AG04450 (cell line): ENCODE measurements at regions of chr11 and their contacts with region 1.

Region 1: GRCh38 chr11:83051760-83052671 is 19.7 kb downstream of the RAB30 start:
- DNase-seq: peak; percentile 94
- H3K4me3 ChIP-seq: no peak overlapping the region
- H3K27ac ChIP-seq: peak overlapping the region; percentile 97
- H3K27me3 ChIP-seq: no peaks in the 10 kb centered on the region
- CTCF ChIP-seq: no peak

Region 2: GRCh38 chr11:83006877-83007330 is 45.1 kb before region 1 on chr11:
- CTCF ChIA-PET with region 1: no interaction called
- POLR2A ChIA-PET with region 1: no interaction called
- DNase-seq: no peak
- H3K4me3 ChIP-seq: no peak overlapping the region
- H3K27ac ChIP-seq: no peak overlapping the region
- H3K27me3 ChIP-seq: no peaks in the 10 kb centered on the region
- CTCF ChIP-seq: no peak

Region 3: DNA sequence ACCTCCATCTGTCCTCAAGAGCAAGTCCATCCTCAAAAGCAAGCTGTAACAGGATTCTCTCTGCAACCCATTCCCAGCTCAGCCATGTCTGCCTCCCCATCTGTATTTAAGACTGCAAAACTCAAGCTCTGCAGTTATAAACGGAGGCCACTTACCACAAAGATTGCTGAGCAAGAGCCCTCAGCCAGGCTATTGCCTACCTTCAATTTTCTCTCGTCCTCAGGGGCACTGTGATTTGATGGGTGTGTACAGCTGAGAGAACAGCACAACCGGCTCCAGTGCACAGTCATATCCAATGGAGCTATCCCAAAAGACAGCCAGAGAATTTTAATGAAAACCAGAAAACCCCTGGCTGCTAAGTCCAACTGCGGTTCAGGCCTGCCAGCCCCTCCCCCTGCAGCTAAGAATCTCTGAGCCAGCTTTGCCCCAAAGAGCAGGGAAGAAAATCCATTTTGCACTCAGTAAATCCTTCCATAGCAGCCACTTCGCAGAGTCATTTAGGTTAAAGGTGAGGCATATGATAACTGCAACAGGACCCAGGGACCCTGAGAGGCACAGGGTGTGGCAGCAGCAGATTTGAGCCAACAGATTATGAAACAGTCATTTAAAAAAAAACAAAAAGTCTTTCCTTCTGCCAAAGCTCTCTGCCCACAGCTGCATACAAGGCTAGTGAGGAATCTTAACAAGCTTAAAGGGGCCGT is 17.9 kb before region 1 on chr11:
- CTCF ChIA-PET with region 1: interaction called, 3 read pairs
- POLR2A ChIA-PET with region 1: interaction called, 22 read pairs
- DNase-seq: no peak
- H3K4me3 ChIP-seq: peak overlapping the region; percentile 21
- H3K27ac ChIP-seq: peak overlapping the region; percentile 59
- H3K27me3 ChIP-seq: no peaks in the 10 kb centered on the region
- CTCF ChIP-seq: no peak

Region 4: GRCh38 chr11:83063073-83063754 is 11.2 kb after region 1 on chr11:
- CTCF ChIA-PET with region 1: interaction called, 3 read pairs
- POLR2A ChIA-PET with region 1: interaction called, 10 read pairs
- DNase-seq: no peak
- H3K4me3 ChIP-seq: no peak overlapping the region
- H3K27ac ChIP-seq: no peak overlapping the region
- H3K27me3 ChIP-seq: no peaks in the 10 kb centered on the region
- CTCF ChIP-seq: no peak

Region 5: DNA sequence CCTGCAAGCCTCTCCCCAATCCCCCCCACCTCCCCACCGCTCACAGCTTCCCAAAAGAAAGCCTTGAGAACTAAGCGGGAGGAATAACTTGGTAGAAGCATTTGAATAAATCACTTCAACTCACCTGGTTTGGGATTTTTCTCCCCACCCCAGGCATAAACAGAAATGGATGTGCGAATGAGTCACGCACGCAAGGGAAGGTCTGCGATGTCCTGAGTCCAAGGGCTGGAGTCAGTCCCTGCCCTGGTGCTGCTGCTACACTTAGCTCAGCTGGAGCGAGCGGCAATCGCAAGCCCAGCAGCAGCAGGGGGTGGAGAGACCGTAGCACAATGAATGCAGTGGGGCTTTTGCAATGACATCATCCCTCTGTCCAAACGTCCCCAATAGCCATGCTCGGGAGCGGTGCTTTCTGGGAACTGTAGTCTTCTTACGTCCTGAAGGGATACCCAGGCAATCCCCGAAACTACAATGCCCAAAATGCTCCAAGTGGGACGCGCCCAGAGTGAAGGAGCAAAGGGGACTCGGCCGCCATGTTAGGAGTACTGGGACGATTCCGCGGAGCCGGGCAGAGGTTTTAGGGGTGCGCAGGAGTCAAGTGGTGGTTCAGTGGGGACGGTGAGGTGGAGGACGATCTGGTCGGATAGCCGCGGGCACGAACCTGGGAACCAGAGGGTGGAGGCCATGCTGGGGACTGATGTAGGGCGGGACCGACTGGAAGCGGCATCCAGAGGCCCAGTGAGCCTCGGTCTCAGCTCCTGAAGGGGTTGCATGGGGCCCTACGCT is 19.7 kb after region 1 on chr11 and contains the start of gene RAB30:
- CTCF ChIA-PET with region 1: interaction called, 3 read pairs
- POLR2A ChIA-PET with region 1: interaction called, 31 read pairs
- DNase-seq: peak; percentile 99
- H3K4me3 ChIP-seq: peak within 1 kb of the TSS; percentile 93
- H3K27ac ChIP-seq: peak within 1 kb of the TSS; percentile 89
- H3K27me3 ChIP-seq: no peaks in the 10 kb centered on the region
- CTCF ChIP-seq: no peak
- polyA plus RNA-seq, gene RAB30: 9.3 and 11.8 TPM in 2 replicates

Region 6: GRCh38 chr11:83156150-83156995 is 104.4 kb after region 1 on chr11:
- CTCF ChIA-PET with region 1: no interaction called
- POLR2A ChIA-PET with region 1: interaction called, 11 read pairs
- DNase-seq: peak; percentile 100
- H3K4me3 ChIP-seq: peak overlapping the region; percentile 79
- H3K27ac ChIP-seq: peak overlapping the region; percentile 65
- H3K27me3 ChIP-seq: no peaks in the 10 kb centered on the region
- CTCF ChIP-seq: no peak